ENCODE measurements at regions of chr7 and their contacts with region 1.

Region 1: GRCh38 chr7:132065193-132065988 is 509.0 kb upstream of the PODXL start:
- DNase-seq: peak; percentile 97
- ATAC-seq: peak; percentile 97
- H3K4me3 ChIP-seq: peak overlapping the region; percentile 28; the same call in 1 of the 2 replicates
- H3K27ac ChIP-seq: peak overlapping the region; percentile 78
- H3K4me1 ChIP-seq: peaks cover 21% of the 10 kb centered on the region
- H3K27me3 ChIP-seq: no peaks in the 10 kb centered on the region
- CTCF ChIP-seq: no peak

Region 2: GRCh38 chr7:131633342-131633843 is 432.0 kb before region 1 on chr7:
- CTCF ChIA-PET with region 1: no interaction called
- POLR2A ChIA-PET with region 1: no interaction called
- intact Hi-C with region 1: no loop called
- DNase-seq: peak; percentile 86
- ATAC-seq: peak; percentile 85
- H3K4me3 ChIP-seq: no peak overlapping the region
- H3K27ac ChIP-seq: peak overlapping the region; percentile 85
- H3K4me1 ChIP-seq: peaks cover 39% of the 10 kb centered on the region
- H3K27me3 ChIP-seq: no peaks in the 10 kb centered on the region
- CTCF ChIP-seq: no peak

Region 3: GRCh38 chr7:131921016-131921415 is 144.4 kb before region 1 on chr7:
- CTCF ChIA-PET with region 1: no interaction called
- POLR2A ChIA-PET with region 1: no interaction called
- intact Hi-C with region 1: no loop called
- DNase-seq: no peak
- ATAC-seq: no peak
- H3K4me3 ChIP-seq: no peak overlapping the region
- H3K27ac ChIP-seq: no peak overlapping the region
- H3K4me1 ChIP-seq: no peaks in the 10 kb centered on the region
- H3K27me3 ChIP-seq: peaks cover 47% of the 10 kb centered on the region
- CTCF ChIP-seq: no peak

Region 4: DNA sequence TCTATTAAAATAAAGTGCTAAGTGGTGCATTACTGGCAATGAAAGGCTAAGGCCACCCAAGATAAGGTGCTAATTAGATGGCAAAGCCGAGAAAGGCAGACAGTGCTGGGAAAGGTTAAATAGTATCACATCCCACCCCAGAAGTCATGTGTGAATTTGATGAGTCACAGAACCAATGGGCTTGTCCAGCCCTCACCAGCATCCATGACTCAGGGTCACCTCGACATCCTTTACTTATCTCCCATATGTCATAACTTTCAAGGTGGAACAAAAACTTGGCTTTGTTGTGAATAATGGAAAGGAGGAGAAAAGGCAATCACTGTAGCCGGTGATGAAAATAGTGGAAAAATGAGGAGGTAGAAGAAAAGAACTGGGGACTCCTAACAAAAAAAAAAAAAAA is 51.8 kb after region 1 on chr7:
- CTCF ChIA-PET with region 1: no interaction called
- POLR2A ChIA-PET with region 1: no interaction called
- intact Hi-C with region 1: loop called (anchors 2 kb)
- DNase-seq: peak; percentile 74
- ATAC-seq: peak; percentile 64
- H3K4me3 ChIP-seq: no peak overlapping the region
- H3K27ac ChIP-seq: peak overlapping the region; percentile 92
- H3K4me1 ChIP-seq: peaks cover 48% of the 10 kb centered on the region
- H3K27me3 ChIP-seq: no peaks in the 10 kb centered on the region
- CTCF ChIP-seq: no peak

Region 5: GRCh38 chr7:132250883-132251653 is 185.7 kb after region 1 on chr7:
- CTCF ChIA-PET with region 1: no interaction called
- POLR2A ChIA-PET with region 1: no interaction called
- intact Hi-C with region 1: loop called (anchors 5 kb)
- DNase-seq: peak; percentile 79
- ATAC-seq: peak; percentile 93
- H3K4me3 ChIP-seq: peak overlapping the region; percentile 11; the same call in 1 of the 2 replicates
- H3K27ac ChIP-seq: peak overlapping the region; percentile 68
- H3K4me1 ChIP-seq: peaks cover 29% of the 10 kb centered on the region
- H3K27me3 ChIP-seq: no peaks in the 10 kb centered on the region
- CTCF ChIP-seq: no peak